ENCODE measurements at regions of chr17 and their contacts with region 1.

Region 1: DNA sequence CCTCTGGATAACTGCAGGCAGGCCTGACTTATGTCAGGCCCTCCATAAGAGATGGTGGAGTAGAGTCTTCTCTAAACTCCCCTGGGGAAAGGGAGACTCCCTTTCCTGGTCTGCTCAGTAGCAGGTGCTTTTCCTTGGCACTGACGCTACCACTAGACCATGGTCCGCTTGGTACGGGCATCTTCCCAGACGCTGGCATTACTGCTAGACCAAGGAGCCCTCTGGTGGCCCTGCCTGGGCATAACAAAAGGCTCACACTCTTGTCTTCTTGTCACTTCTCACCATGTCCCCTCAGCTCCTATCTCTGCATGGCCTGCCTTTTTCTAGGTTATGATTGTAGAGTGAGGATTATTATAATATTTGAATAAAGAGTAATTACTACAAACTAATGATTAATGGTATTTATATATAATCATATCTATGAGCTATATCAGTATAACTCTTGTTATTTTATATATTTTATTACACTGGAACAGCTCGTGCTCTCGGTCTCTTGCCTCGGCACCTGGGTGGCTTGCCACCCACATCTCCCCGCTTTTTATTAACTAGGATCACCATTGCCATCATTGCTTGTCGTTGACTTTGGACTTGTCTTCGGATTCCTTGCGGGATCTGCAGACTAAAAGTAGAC is 59.8 kb upstream of the ARL4D start:
- DNase-seq: peak; percentile 32 to 78 (median 62)
- ATAC-seq: peak; percentile 36
- H3K4me3 ChIP-seq: no peak overlapping the region
- H3K4me3 Mint-ChIP-seq: no peak overlapping the region
- H3K27ac ChIP-seq: no peak overlapping the region
- H3K27ac Mint-ChIP-seq: no peak overlapping the region
- H3K4me1 ChIP-seq: peaks cover 6% of the 10 kb centered on the region
- H3K4me1 Mint-ChIP-seq: peaks cover 8% of the 10 kb centered on the region
- H3K27me3 ChIP-seq: no peaks in the 10 kb centered on the region
- H3K27me3 Mint-ChIP-seq: no peaks in the 10 kb centered on the region
- CTCF ChIP-seq: peak; percentile 69

Region 2: DNA sequence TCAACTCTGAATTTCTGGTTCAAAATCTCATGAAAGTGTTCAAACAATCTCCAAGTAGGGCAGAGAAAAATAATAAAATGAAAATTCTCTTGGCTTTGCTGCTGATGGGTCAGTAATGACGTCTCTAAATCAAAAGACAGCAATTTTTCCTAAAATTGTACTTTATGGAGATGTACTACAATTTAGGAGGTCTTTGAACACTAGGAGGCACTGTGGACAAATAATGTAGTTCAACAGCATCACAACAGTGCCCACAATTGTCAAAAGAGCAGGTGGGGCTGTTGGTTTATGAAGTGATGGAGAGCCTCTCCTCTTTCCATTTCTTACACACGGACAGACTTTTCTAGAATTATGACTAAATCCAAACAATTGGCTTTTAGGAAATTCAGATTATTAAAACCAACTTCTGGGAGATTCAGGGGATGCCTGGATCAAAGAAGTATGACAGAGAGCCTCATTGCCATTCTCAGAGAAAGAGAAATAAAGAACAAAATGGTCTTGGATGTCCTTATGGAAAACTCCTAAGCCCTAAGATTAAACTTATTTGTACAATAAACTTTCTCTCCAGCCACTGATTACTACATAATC is 617.9 kb before region 1 on chr17:
- CTCF ChIA-PET with region 1: no interaction called
- POLR2A ChIA-PET with region 1: no interaction called
- intact Hi-C with region 1: loop called in 1 of 2 experiments (anchors 10 kb)
- DNase-seq: peak in 5 of 9 experiments; percentile 17 to 79 (median 41)
- ATAC-seq: peak; percentile 89
- H3K4me3 ChIP-seq: no peak overlapping the region
- H3K4me3 Mint-ChIP-seq: no peak overlapping the region
- H3K27ac ChIP-seq: no peak overlapping the region
- H3K27ac Mint-ChIP-seq: no peak overlapping the region
- H3K4me1 ChIP-seq: no peaks in the 10 kb centered on the region
- H3K4me1 Mint-ChIP-seq: no peaks in the 10 kb centered on the region
- H3K27me3 ChIP-seq: no peaks in the 10 kb centered on the region
- H3K27me3 Mint-ChIP-seq: no peaks in the 10 kb centered on the region
- CTCF ChIP-seq: peak; percentile 66

Region 3: DNA sequence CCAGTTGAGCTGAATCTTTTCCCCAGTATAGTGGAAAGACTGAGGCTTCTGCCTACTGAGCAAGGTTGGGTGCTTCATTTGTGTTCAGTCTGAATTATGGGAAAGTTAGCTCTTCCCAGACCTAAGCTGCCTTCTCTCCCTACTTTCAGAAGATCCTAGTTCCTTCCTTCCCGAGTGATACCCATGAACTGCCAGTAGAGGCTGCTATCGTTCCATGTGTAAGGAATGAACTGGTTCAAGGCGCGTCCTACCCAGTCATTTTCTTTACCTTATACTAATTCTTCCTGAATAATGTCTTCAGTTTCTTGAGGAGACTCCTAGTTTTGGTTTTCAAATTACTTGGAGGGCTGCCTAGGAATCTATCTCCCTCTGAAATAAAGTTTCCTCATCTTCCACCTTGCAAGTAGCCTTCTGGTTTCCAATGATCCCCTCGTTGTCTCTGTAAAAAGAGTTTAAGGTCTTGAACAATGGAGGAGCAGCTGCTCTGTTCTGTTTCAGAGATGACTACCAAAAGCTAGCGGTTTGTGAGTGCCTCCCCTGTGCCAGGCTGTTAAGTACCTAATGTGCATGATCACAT is 495.6 kb before region 1 on chr17:
- CTCF ChIA-PET with region 1: interaction called, 3 read pairs
- POLR2A ChIA-PET with region 1: no interaction called
- intact Hi-C with region 1: loop called in 1 of 2 experiments (anchors 5 kb)
- DNase-seq: peak in 2 of 9 experiments; percentile 31 to 47
- ATAC-seq: no peak
- H3K4me3 ChIP-seq: no peak overlapping the region
- H3K4me3 Mint-ChIP-seq: no peak overlapping the region
- H3K27ac ChIP-seq: no peak overlapping the region
- H3K27ac Mint-ChIP-seq: no peak overlapping the region
- H3K4me1 ChIP-seq: no peaks in the 10 kb centered on the region
- H3K4me1 Mint-ChIP-seq: no peaks in the 10 kb centered on the region
- H3K27me3 ChIP-seq: no peaks in the 10 kb centered on the region
- H3K27me3 Mint-ChIP-seq: no peaks in the 10 kb centered on the region
- CTCF ChIP-seq: peak; percentile 35

Region 4: DNA sequence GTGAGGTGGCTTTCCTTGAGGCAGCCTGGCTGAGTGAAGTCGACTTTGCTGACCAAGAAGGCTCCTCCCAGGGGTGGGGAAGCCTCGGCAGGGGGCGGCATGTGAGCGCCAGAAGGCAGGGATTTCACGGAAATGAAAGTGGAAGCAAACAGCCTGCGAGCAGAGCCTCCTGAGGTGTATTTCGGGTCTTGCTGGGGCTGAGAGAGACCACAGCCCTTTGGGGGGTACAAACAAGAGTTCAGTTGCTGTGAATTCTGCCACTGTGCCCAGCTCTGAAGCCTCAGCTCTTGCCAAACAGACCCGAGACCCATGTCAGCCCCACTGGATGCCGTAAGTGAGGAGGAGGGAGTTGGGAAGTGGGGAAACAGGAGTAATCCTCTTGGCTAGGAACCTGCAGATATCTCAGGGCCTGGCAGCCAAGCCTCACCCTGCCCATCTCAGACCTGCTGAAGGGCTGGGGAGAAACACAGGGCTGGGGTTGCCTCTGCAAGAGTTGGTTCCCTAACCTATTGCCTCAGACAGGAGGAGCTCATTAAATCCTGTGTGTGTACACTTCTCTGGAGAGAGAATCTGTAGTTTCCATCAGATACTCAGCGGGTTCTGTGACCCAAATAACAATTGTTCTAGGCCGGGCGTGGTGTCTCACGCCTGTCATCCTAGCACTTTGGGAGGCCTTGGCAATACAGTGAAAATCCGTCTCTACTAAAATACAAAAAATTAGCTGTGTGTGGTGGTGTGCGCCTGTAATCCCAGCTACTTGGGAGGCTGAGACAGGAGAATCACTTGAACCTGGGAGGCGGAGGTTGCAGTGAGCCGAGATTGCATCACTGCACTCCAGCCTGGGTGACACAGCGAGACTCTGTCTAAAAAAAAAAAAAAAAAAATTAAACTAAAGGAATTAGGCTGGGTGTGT is 332.1 kb before region 1 on chr17 and contains the start of gene IFI35:
- CTCF ChIA-PET with region 1: interaction called, 5 read pairs
- POLR2A ChIA-PET with region 1: no interaction called
- intact Hi-C with region 1: loop called (anchors 1 to 5 kb)
- DNase-seq: peak; percentile 65 to 92 (median 88)
- ATAC-seq: peak; percentile 99
- H3K4me3 ChIP-seq: peak within 1 kb of the TSS; percentile 75 to 84
- H3K4me3 Mint-ChIP-seq: peak within 1 kb of the TSS; percentile 99
- H3K27ac ChIP-seq: peak within 1 kb of the TSS; percentile 82 to 89
- H3K27ac Mint-ChIP-seq: peak within 1 kb of the TSS; percentile 99
- H3K4me1 ChIP-seq: peaks cover 11% of the 10 kb centered on the region
- H3K4me1 Mint-ChIP-seq: peaks cover 27% of the 10 kb centered on the region
- H3K27me3 ChIP-seq: no peaks in the 10 kb centered on the region
- H3K27me3 Mint-ChIP-seq: no peaks in the 10 kb centered on the region
- CTCF ChIP-seq: peak; percentile 57
- total RNA-seq, gene IFI35: 24.3 to 25.6 TPM

Region 5: GRCh38 chr17:43388359-43389045 is 49.5 kb after region 1 on chr17:
- CTCF ChIA-PET with region 1: interaction called, 3 read pairs
- POLR2A ChIA-PET with region 1: interaction called, 4 read pairs
- intact Hi-C with region 1: loop called in 1 of 2 experiments (anchors 2 kb)
- DNase-seq: peak; percentile 88 to 96 (median 90)
- ATAC-seq: peak; percentile 71
- H3K4me3 ChIP-seq: peak overlapping the region; percentile 74 to 94
- H3K4me3 Mint-ChIP-seq: peak overlapping the region; percentile 89
- H3K27ac ChIP-seq: peak overlapping the region; percentile 94 to 96
- H3K27ac Mint-ChIP-seq: peak overlapping the region; percentile 97
- H3K4me1 ChIP-seq: peaks cover 14% of the 10 kb centered on the region
- H3K4me1 Mint-ChIP-seq: peaks cover 37% of the 10 kb centered on the region
- H3K27me3 ChIP-seq: no peaks in the 10 kb centered on the region
- H3K27me3 Mint-ChIP-seq: no peaks in the 10 kb centered on the region
- CTCF ChIP-seq: no peak